GM10248 (cell line): ENCODE measurements at regions of chr5 and their contacts with region 1.

Region 1: GRCh38 chr5:180101451-180102105 is 30.0 kb upstream of the RNF130 start:
- DNase-seq: no peak
- CTCF ChIP-seq: no peak

Region 2: GRCh38 chr5:179954434-179954833 is 147.1 kb before region 1 on chr5:
- CTCF ChIA-PET with region 1: no interaction called
- POLR2A ChIA-PET with region 1: no interaction called
- DNase-seq: no peak
- CTCF ChIP-seq: no peak

Region 3: DNA sequence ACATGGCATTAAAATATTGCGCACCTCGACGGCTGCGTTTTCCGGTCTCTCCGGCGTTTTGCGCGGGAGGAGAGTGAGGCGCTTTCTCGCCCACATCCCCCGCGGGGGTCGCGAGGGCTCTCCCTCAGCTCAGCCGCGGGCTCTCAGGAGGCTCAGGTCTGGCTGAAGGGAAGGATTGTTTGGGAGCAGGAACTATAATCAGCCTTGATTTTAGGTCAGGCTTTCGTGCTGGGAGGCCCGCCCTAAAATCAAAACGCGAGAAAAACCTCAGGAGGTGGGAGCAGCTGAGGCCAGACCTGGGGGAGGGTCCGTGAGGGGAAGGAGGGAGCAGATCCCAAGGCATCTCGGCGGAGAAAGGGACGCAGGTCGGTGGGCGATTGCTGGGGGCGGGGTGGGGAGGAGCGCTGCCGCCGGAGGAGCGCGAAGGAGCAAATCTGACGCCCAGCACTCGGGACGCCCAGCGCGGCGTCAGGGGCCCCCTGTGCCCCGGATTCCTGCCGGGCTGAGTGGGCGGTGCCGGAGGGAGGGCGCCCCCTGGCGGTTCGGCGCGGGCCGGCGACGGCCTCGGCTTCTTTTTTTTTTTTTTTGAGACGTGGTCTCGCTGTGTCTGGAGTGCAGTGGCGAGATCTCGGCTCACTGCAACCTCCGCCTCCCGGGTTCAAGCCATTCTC is 11.3 kb before region 1 on chr5:
- CTCF ChIA-PET with region 1: interaction called, 12 read pairs
- POLR2A ChIA-PET with region 1: no interaction called
- DNase-seq: peak; percentile 64
- CTCF ChIP-seq: peak; percentile 70

Region 4: DNA sequence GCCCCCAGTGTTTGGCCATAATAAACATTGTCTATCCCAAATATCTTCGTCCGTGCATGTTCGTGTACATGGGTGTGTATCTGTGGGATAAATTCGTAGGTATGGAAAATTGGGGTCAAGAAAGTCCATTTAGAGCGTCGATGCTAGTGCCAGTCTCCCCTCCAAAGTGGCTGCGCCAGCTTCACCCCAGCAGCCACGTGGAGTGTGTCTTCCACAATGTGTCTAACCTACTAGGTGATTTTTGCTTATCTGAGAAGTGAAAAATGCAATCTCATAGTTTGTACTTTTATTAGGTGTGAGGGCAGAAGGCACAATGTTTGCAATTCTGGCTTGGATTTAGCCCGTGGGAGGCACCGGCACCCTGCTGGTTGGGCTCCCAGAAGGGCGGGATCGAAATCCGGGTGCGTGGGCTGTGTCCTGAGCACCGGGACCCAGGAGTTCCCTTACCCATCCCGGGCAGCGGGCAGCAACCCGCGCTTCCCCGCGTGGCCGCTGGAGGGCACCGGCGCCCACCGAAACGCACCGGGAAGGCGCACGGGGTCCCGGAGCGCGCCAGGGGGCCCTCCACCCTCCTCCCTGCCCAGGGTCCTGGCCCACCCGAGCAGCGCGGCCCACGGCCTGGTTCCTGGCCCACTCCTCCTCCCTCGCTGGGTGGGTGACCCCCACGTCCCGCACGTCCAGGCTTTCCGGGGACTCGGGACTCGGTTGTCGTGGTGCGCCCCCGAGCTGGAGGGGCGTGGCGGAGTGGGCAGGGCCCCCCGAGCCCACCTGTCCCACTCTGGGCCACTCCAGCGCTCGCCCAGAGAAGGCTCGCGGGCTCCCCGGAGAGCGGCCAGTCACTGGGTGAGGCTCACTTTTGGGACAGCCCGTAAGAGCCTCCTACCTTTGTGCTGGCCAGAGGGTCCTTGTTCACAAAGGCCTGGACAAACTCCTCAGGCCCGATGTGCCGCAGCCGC is 25.4 kb after region 1 on chr5:
- CTCF ChIA-PET with region 1: no interaction called
- POLR2A ChIA-PET with region 1: no interaction called
- DNase-seq: peak; percentile 67
- CTCF ChIP-seq: peak; percentile 74